ENCODE measurements at regions of chr3 and their contacts with region 1.

Region 1: DNA sequence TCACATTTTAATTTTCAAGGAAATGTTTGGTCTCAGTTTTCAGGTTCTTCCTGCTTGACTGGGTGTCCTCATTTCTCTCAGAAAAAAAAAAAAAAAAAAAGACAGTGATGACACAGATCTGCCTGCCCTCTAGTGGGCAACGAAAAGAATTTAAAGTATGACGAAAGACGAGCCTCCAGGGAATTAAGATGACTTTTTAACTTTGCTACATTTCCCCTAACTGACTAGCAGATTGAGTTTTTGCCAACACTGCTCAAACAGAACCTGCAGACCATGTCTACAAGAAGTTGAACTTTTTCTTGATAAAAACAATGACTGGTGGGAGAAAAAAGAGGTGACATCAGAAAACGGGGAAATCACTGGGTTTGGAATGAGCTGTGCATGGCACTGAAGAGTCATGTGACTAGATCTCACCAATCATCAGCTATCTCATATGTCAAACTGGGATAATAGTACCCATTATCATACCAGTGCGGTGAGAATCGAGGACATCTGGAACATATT is 40.8 kb downstream of the EOMES start:
- DNase-seq: peak; percentile 41
- H3K4me3 ChIP-seq: no peak overlapping the region
- H3K27me3 ChIP-seq: no peaks in the 10 kb centered on the region
- CTCF ChIP-seq: peak; percentile 65

Region 2: GRCh38 chr3:27326629-27327545 is 354.4 kb before region 1 on chr3:
- CTCF ChIA-PET with region 1: no interaction called
- POLR2A ChIA-PET with region 1: interaction called, 11 read pairs
- DNase-seq: peak; percentile 85
- H3K4me3 ChIP-seq: no peak overlapping the region
- H3K27me3 ChIP-seq: no peaks in the 10 kb centered on the region
- CTCF ChIP-seq: no peak

Region 3: DNA sequence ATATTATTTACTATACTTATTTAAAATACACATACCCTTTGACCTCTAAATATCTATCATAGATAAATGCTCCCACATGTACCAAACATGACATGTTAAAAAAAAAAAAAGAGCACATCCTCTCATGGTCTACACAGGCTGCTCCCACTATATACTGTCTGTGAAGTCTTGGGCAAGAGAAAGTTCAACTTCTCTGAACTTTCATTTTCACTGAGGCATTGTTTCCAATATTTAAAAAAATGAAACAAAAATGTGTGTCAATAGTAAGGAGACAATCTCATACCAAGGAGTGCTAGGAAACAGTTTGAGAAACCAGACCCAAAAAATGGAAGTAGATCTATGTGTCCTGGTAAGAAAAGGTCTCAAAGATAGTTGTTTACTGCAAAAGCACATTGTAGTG is 226.4 kb before region 1 on chr3:
- CTCF ChIA-PET with region 1: no interaction called
- POLR2A ChIA-PET with region 1: interaction called, 18 read pairs
- DNase-seq: no peak
- H3K4me3 ChIP-seq: no peak overlapping the region
- H3K27me3 ChIP-seq: no peaks in the 10 kb centered on the region
- CTCF ChIP-seq: no peak